ENCODE measurements at regions of chr7 and their contacts with region 1.

Region 1: GRCh38 chr7:16918288-16918895 is 36.6 kb upstream of the AGR3 start:
- DNase-seq: peak; percentile 47
- H3K4me3 Mint-ChIP-seq: no peak overlapping the region
- H3K27ac Mint-ChIP-seq: no peak overlapping the region
- H3K4me1 Mint-ChIP-seq: peaks cover 48% of the 10 kb centered on the region
- H3K27me3 Mint-ChIP-seq: no peaks in the 10 kb centered on the region
- CTCF ChIP-seq: peak; percentile 69

Region 2: DNA sequence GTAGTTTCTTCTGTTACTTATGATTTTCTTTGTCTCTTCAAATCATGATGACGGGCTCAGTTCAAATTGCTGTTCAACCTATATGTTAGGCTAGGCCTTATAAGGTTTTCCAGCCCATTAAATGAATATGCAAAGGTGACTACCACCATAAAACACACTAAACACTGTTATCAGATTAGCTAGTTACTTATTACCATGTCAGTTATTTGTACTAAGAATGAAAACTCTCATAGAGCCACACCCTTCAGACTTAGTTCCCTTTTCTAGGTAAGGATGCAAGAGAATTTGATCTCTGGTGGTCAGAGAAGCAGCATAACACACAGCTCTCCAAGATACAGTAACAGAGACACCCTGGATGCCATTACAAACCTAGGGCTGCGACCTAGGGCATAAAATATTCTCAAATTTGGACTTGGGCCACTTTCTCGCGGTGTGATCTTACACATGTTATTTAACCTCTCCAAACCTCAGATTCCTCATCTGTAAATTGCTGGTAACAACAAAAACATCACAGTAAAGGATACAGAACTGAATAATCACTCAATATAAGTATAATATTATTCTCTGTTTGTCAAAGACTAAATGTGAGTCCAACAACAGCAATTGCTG is 308.4 kb before region 1 on chr7:
- CTCF ChIA-PET with region 1: no interaction called
- POLR2A ChIA-PET with region 1: no interaction called
- intact Hi-C with region 1: no loop called
- DNase-seq: no peak
- H3K4me3 Mint-ChIP-seq: no peak overlapping the region
- H3K27ac Mint-ChIP-seq: no peak overlapping the region
- H3K4me1 Mint-ChIP-seq: no peaks in the 10 kb centered on the region
- H3K27me3 Mint-ChIP-seq: no peaks in the 10 kb centered on the region
- CTCF ChIP-seq: no peak

Region 3: GRCh38 chr7:16695621-16696237 is 222.7 kb before region 1 on chr7:
- CTCF ChIA-PET with region 1: interaction called, 37 read pairs
- POLR2A ChIA-PET with region 1: no interaction called
- intact Hi-C with region 1: loop called (anchors 1 kb)
- DNase-seq: peak; percentile 65
- H3K4me3 Mint-ChIP-seq: no peak overlapping the region
- H3K27ac Mint-ChIP-seq: no peak overlapping the region
- H3K4me1 Mint-ChIP-seq: no peaks in the 10 kb centered on the region
- H3K27me3 Mint-ChIP-seq: no peaks in the 10 kb centered on the region
- CTCF ChIP-seq: peak; percentile 50

Measured in MCF 10A (cell line).